ENCODE measurements at regions of chr5 and their contacts with region 1.

Region 1: GRCh38 chr5:101942321-101943215 is 353.5 kb downstream of the SLCO4C1 start:
- DNase-seq: no peak
- H3K4me3 Mint-ChIP-seq: no peak overlapping the region
- H3K27ac Mint-ChIP-seq: no peak overlapping the region
- H3K4me1 Mint-ChIP-seq: no peaks in the 10 kb centered on the region
- H3K27me3 Mint-ChIP-seq: no peaks in the 10 kb centered on the region

Region 2: DNA sequence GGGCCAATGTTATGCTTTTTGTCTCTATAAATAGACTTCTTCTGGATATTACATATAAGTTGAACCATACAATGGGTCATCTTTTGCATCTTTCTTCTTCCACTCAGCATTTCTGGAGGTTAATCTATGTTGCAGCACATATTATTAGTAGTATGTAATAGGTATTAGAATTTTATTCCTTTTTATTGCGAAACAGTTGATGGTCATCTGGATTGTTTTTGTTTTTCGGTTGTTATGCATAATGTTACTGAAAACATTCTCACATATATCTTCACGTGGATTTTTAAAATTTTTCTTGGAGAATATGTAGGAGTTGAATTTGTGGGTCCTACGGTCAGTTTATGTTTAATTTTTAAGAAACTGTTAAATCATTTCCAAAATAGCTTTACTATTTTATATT is 113.3 kb before region 1 on chr5:
- CTCF ChIA-PET with region 1: no interaction called
- POLR2A ChIA-PET with region 1: no interaction called
- intact Hi-C with region 1: no loop called
- DNase-seq: no peak
- H3K4me3 Mint-ChIP-seq: no peak overlapping the region
- H3K27ac Mint-ChIP-seq: no peak overlapping the region
- H3K4me1 Mint-ChIP-seq: no peaks in the 10 kb centered on the region
- H3K27me3 Mint-ChIP-seq: no peaks in the 10 kb centered on the region

Region 3: DNA sequence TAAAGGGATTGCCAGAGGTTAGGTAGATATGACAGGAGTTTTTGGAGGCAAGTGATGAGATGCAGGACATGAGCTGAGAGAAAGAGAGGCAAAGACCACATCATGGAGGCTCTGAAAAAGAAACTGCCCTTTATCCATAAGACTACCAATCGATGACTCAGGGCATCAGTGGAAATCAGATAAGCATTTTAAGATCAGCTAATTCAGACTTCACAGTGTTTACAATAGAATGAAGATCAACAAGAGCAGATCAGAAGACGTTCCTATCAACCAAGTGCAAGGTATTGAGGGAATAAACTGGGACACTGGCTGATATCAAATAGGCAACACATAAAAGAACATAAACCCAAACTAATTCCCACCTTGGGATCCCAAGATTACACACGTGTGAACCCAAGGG is 126.3 kb after region 1 on chr5:
- CTCF ChIA-PET with region 1: no interaction called
- POLR2A ChIA-PET with region 1: no interaction called
- intact Hi-C with region 1: no loop called
- DNase-seq: no peak
- H3K4me3 Mint-ChIP-seq: no peak overlapping the region
- H3K27ac Mint-ChIP-seq: no peak overlapping the region
- H3K4me1 Mint-ChIP-seq: no peaks in the 10 kb centered on the region
- H3K27me3 Mint-ChIP-seq: no peaks in the 10 kb centered on the region

Region 4: DNA sequence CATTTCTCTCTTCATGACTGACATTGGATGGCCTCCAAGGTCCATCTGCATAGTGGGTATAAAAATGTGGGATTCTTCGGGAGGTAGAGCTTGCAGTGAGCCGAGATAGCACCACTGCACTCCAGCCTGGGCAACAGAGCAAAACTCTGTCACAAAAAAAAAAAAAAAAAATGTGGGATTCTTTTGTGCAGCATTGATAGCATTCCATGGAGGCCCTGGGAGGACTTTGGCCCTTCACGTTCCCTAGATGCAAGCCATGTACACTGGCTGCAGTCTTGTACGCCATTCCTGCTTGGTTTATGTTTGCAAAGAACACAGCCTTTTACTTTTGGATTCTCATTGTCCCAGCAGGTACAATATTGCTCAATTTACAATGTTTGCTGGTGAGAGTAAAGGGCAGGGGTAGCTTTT is 195.7 kb after region 1 on chr5:
- CTCF ChIA-PET with region 1: no interaction called
- POLR2A ChIA-PET with region 1: no interaction called
- intact Hi-C with region 1: no loop called
- DNase-seq: no peak
- H3K4me3 Mint-ChIP-seq: no peak overlapping the region
- H3K27ac Mint-ChIP-seq: no peak overlapping the region
- H3K4me1 Mint-ChIP-seq: no peaks in the 10 kb centered on the region
- H3K27me3 Mint-ChIP-seq: no peaks in the 10 kb centered on the region

Region 5: DNA sequence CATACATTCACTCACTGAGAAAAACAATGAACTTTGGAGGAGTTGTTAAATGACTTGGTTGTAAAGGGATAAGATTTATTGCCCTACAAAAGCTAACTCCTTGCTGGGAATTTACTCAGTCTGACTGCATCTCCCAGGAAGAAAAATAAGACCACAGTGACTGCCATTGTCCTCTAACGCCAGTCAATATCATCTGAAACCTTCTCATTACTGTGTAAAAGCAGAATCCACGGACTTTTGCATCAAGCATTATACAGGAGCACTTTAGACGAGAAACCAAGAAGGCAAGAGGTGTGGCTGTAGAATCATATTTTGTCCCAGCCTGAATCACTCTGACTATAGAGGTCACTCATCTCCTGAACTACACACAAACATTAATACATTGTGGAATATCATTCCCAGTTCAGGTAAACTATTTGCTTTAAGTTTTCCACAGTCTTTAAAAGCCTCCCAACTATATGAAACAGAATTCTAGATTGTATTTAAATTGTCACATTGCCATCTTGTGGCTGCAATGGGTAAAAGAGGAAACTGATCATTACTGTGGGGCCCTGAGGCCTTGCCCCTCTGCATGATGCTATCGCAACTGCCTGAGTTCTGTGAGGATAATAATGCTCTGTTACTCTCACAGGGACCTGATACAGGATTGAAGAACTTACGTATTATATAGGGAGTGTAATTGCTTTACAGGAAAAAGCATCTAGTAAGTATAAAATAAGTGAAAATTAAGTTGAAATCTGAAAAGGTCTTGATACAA is 210.6 kb after region 1 on chr5:
- CTCF ChIA-PET with region 1: interaction called, 3 read pairs
- POLR2A ChIA-PET with region 1: no interaction called
- intact Hi-C with region 1: loop called (anchors 5 kb)
- DNase-seq: no peak
- H3K4me3 Mint-ChIP-seq: no peak overlapping the region
- H3K27ac Mint-ChIP-seq: no peak overlapping the region
- H3K4me1 Mint-ChIP-seq: no peaks in the 10 kb centered on the region
- H3K27me3 Mint-ChIP-seq: no peaks in the 10 kb centered on the region

Region 6: DNA sequence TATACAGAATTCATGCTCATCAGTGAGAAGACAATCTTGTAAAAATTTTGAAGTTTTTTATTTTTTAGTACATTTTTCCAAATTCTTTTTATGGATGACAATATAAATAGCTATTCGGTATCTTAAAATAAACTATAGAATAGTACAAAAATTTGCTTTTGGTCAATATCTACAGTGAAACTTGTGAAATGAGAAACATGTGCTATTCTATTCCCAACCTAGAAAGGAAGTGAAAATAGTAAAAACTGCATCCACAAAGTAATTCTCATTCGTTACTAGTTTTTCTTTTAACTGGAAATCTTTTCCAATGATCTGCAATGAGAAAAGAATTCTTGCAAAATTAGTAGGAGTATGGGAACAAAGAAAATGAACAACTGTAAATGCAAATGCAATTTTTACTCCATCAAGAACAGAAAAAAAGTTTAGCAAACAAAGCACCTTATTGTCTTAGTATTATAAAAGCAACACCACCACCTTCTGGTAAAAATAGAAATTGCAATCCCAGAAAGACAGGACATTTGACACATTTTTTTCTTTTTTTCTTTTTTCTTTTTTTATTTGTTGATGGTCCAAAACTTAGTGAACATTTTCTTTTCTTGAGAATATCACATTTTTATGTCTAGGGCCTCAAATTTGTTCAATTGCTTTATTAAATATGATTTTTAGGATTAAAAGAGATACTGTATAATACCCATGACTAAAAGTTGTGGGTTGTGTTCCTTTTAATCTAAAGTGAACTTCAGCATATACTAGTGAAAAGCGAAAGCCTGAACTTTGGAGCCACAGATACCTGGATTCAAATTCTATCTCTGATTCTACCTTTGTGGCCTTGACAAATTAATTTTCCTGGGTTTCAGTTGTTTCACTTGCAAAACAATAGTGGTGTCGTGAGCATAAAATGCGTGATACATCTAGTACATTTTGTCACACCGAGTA is 281.2 kb after region 1 on chr5:
- CTCF ChIA-PET with region 1: interaction called, 5 read pairs
- POLR2A ChIA-PET with region 1: no interaction called
- intact Hi-C with region 1: loop called (anchors 1 kb)
- DNase-seq: no peak
- H3K4me3 Mint-ChIP-seq: no peak overlapping the region
- H3K27ac Mint-ChIP-seq: no peak overlapping the region
- H3K4me1 Mint-ChIP-seq: no peaks in the 10 kb centered on the region
- H3K27me3 Mint-ChIP-seq: no peaks in the 10 kb centered on the region

Measured in activated CD4-positive, alpha-beta memory T cell treated with anti-CD3 and anti-CD28 coated beads for 36 hours (primary cell).